Natural killer cell (primary cell): ENCODE measurements at regions of chr9 and their contacts with region 1.

Region 1: GRCh38 chr9:128881901-128882681 is at the starts of genes KYAT1 and LRRC8A:
- DNase-seq: peak; percentile 98 to 99
- ATAC-seq: peak; percentile 91 to 93 (median 92)
- H3K4me3 ChIP-seq: peak within 1 kb of the TSS; percentile 90
- H3K4me3 Mint-ChIP-seq: peak within 1 kb of the TSS; percentile 99
- H3K27ac ChIP-seq: peak within 1 kb of the TSS; percentile 74
- H3K27ac Mint-ChIP-seq: peak within 1 kb of the TSS; percentile 93 to 97
- H3K4me1 ChIP-seq: peaks cover 37% of the 10 kb centered on the region
- H3K4me1 Mint-ChIP-seq: peaks cover 60 to 64% of the 10 kb centered on the region in 2 donors
- H3K27me3 ChIP-seq: no peaks in the 10 kb centered on the region
- H3K27me3 Mint-ChIP-seq: no peaks in the 10 kb centered on the region
- CTCF ChIP-seq: no peak
- total RNA-seq, gene KYAT1: 8.9 to 11.3 (median 9.1) TPM
- total RNA-seq, gene LRRC8A: 60.0 to 82.9 (median 67.9) TPM

Region 2: GRCh38 chr9:128625391-128626145 is 256.5 kb before region 1 on chr9:
- intact Hi-C with region 1: no loop called
- DNase-seq: no peak
- ATAC-seq: no peak
- H3K4me3 ChIP-seq: no peak overlapping the region
- H3K4me3 Mint-ChIP-seq: no peak overlapping the region
- H3K27ac ChIP-seq: no peak overlapping the region
- H3K27ac Mint-ChIP-seq: no peak overlapping the region
- H3K4me1 ChIP-seq: no peaks in the 10 kb centered on the region
- H3K4me1 Mint-ChIP-seq: no peaks in the 10 kb centered on the region
- H3K27me3 ChIP-seq: no peaks in the 10 kb centered on the region
- H3K27me3 Mint-ChIP-seq: no peaks in the 10 kb centered on the region
- CTCF ChIP-seq: no peak

Region 3: DNA sequence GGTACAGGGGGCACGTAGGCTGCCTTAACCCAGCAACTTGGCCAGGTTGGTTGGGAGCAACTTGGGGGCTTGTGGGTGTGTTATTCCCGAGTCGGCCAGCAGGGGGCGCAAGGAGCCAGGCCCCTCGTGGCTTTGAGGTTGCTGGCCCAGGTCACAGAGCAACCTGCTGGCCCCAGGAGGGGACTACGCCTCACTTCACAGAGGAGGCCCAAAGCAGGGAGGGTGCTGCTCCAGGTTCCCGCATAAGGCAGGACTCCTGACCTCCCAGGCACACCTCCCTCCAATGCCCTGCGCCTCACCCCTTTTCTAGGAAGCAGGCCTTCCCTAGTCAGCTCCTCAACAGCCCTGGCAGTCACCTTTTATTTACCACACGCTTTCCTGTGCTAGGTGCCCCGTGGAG is 18.4 kb before region 1 on chr9:
- intact Hi-C with region 1: loop called (anchors 1 kb)
- DNase-seq: peak; percentile 85 to 90
- ATAC-seq: peak; percentile 90 to 100 (median 98)
- H3K4me3 ChIP-seq: no peak overlapping the region
- H3K4me3 Mint-ChIP-seq: no peak overlapping the region
- H3K27ac ChIP-seq: no peak overlapping the region
- H3K27ac Mint-ChIP-seq: peak overlapping the region in 1 of 2 donors; percentile 14
- H3K4me1 ChIP-seq: peaks cover 5% of the 10 kb centered on the region
- H3K4me1 Mint-ChIP-seq: peaks cover 0 to 6% of the 10 kb centered on the region in 2 donors
- H3K27me3 ChIP-seq: no peaks in the 10 kb centered on the region
- H3K27me3 Mint-ChIP-seq: no peaks in the 10 kb centered on the region
- CTCF ChIP-seq: peak; percentile 94

Region 4: GRCh38 chr9:128902351-128903078 is 20.4 kb after region 1 on chr9:
- intact Hi-C with region 1: loop called (anchors 1 kb)
- DNase-seq: peak; percentile 81 to 93
- ATAC-seq: peak; percentile 78 to 92 (median 89)
- H3K4me3 ChIP-seq: peak overlapping the region; percentile 12
- H3K4me3 Mint-ChIP-seq: peak overlapping the region; percentile 83
- H3K27ac ChIP-seq: peak overlapping the region; percentile 84
- H3K27ac Mint-ChIP-seq: peak overlapping the region; percentile 87 to 95
- H3K4me1 ChIP-seq: peaks cover 81% of the 10 kb centered on the region
- H3K4me1 Mint-ChIP-seq: peaks cover 40 to 78% of the 10 kb centered on the region in 2 donors
- H3K27me3 ChIP-seq: no peaks in the 10 kb centered on the region
- H3K27me3 Mint-ChIP-seq: no peaks in the 10 kb centered on the region
- CTCF ChIP-seq: no peak

Region 5: DNA sequence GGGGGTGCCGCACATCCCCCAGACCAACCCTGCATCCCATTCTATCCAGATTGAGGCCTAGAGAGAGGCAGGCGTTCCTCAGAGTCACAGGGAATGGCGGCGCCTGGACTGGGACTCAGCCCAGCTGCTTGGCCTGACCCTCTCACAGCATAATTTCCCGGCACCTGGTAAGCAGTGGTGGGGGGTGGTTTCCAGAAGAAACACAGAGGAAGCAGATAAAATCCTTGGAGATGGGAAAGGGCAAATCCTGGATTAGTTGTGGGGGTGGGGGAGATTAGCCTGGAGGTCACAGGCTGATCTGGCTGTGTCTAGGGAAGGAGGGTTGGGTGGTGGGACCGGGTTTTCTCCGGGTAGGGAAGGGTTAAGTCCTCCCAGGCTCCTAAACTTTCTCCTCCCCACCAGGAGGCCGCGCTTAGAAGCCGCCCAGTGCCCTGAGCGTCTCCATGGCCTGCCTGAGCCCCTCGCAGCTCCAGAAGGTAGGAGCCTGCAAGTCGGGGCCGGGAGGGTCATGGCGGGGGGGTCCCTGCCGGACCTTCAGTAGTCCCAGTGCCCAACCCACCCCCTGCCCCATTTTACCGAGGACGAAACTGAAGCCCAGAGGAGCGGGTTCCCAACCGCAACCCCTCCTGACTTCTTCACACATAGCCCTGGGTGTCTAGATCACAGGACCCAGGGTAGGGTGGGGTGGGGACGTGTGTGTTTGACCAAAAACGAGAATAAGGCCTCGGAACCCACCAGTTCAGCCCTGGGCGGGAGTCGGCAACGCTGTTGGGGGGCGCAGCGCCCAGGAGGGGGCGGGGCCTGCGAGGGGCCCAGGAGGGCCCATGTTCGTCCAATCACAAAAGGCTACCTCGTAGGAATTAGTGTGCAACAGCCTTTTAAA is 40.0 kb after region 1 on chr9:
- intact Hi-C with region 1: loop called (anchors 5 kb)
- DNase-seq: peak; percentile 37 to 39
- ATAC-seq: peak; percentile 72 to 82 (median 77)
- H3K4me3 ChIP-seq: peak overlapping the region; percentile 30
- H3K4me3 Mint-ChIP-seq: peak overlapping the region; percentile 60
- H3K27ac ChIP-seq: peak overlapping the region; percentile 74
- H3K27ac Mint-ChIP-seq: peak overlapping the region; percentile 83 to 88
- H3K4me1 ChIP-seq: peaks cover 24% of the 10 kb centered on the region
- H3K4me1 Mint-ChIP-seq: peaks cover 6 to 43% of the 10 kb centered on the region in 2 donors
- H3K27me3 ChIP-seq: no peaks in the 10 kb centered on the region
- H3K27me3 Mint-ChIP-seq: no peaks in the 10 kb centered on the region
- CTCF ChIP-seq: no peak

Region 6: GRCh38 chr9:128947422-128948301 is 65.6 kb after region 1 on chr9 and contains the starts of genes DOLK and NUP188:
- intact Hi-C with region 1: loop called (anchors 1 kb)
- DNase-seq: peak; percentile 98 to 100
- ATAC-seq: peak; percentile 85 to 97 (median 92)
- H3K4me3 ChIP-seq: peak within 1 kb of the TSS; percentile 89
- H3K4me3 Mint-ChIP-seq: peak within 1 kb of the TSS; percentile 95
- H3K27ac ChIP-seq: peak within 1 kb of the TSS; percentile 94
- H3K27ac Mint-ChIP-seq: peak within 1 kb of the TSS; percentile 86 to 96
- H3K4me1 ChIP-seq: peaks cover 22% of the 10 kb centered on the region
- H3K4me1 Mint-ChIP-seq: peaks cover 29% of the 10 kb centered on the region in 2 donors
- H3K27me3 ChIP-seq: no peaks in the 10 kb centered on the region
- H3K27me3 Mint-ChIP-seq: no peaks in the 10 kb centered on the region
- CTCF ChIP-seq: no peak
- total RNA-seq, gene DOLK: 4.8 to 8.9 (median 6.7) TPM
- total RNA-seq, gene NUP188: 53.9 to 66.4 (median 58.3) TPM

Region 7: DNA sequence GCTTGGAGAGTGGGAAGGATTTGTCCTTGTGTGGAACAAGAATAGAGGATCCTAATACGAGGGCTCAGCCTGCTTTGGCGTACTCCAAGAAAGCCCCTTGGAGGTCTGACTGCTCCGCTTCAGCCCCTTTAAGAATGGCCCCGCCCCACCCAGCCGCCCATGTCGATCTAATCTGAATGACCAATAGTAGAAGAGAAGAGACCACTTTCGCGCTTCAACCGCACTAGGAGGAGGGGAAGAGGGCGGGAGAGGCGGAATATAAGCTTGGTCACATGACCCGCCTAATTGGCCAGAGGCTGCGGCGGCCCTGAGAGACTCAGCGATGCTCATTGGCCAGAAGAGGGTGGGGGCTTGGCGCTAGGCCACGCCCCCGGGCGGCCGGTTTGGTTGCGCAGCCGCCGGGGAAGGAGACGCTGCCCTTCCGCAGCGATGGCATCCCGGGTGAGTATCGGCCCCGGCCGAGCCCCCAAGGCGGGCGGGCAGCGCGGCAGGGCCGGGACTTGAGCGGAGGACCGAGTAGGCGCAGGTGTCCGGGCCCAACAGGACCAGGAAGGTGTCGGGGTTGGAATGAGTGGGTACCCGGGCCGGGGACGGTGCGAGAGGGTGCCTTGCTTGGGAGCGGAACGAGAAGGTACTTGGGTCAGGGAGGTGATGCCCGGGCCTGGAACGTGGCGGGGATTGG is 154.3 kb after region 1 on chr9 and contains the start of gene MIGA2:
- intact Hi-C with region 1: loop called (anchors 1 kb)
- DNase-seq: peak; percentile 90 to 97
- ATAC-seq: peak; percentile 96 to 100 (median 98)
- H3K4me3 ChIP-seq: peak within 1 kb of the TSS; percentile 99
- H3K4me3 Mint-ChIP-seq: peak within 1 kb of the TSS; percentile 97
- H3K27ac ChIP-seq: peak within 1 kb of the TSS; percentile 62
- H3K27ac Mint-ChIP-seq: peak within 1 kb of the TSS; percentile 73 to 89
- H3K4me1 ChIP-seq: peaks cover 28% of the 10 kb centered on the region
- H3K4me1 Mint-ChIP-seq: peaks cover 24 to 40% of the 10 kb centered on the region in 2 donors
- H3K27me3 ChIP-seq: no peaks in the 10 kb centered on the region
- H3K27me3 Mint-ChIP-seq: no peaks in the 10 kb centered on the region
- CTCF ChIP-seq: no peak
- total RNA-seq, gene MIGA2: 67.3 to 77.9 (median 73.9) TPM

Region 8: GRCh38 chr9:129052592-129052991 is 170.5 kb after region 1 on chr9:
- intact Hi-C with region 1: no loop called
- DNase-seq: no peak
- ATAC-seq: no peak
- H3K4me3 ChIP-seq: no peak overlapping the region
- H3K4me3 Mint-ChIP-seq: no peak overlapping the region
- H3K27ac ChIP-seq: no peak overlapping the region
- H3K27ac Mint-ChIP-seq: no peak overlapping the region
- H3K4me1 ChIP-seq: no peaks in the 10 kb centered on the region
- H3K4me1 Mint-ChIP-seq: no peaks in the 10 kb centered on the region
- H3K27me3 ChIP-seq: no peaks in the 10 kb centered on the region
- H3K27me3 Mint-ChIP-seq: no peaks in the 10 kb centered on the region
- CTCF ChIP-seq: no peak